AG04450 (cell line): ENCODE measurements at regions of chr1 and their contacts with region 1.

Region 1: DNA sequence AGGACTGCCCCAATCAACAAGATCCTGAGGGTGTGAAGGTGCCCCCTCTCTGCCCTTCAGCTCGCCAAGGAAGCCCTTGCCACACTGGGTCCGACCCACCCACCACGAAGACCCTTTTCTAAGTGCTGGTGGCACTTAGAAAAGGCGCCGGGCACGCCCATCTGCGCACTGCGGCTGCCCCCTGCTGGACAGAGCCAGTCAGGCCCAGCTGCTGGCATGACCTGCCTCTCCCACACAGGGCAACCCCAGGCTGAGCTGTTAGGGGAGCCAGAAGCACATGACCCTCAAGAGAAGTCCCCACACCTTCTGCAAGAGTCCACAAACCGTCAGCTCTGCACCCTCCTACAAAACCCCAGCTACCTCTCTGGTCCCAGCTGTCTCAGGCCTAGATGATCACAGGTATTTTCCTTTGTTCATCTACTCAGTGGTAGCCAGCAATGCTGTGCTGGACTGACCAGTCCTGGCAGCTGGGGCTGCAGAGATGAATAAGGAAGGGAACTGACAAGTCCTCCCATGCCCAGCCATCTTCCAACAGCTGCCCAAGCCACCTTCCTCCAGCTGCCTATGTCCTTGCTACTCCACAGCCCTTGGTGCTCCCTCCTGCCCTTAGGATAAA is 40.0 kb upstream of the ZC3H12A start:
- DNase-seq: no peak
- H3K4me3 ChIP-seq: no peak overlapping the region
- H3K27ac ChIP-seq: no peak overlapping the region
- H3K27me3 ChIP-seq: peaks cover 19% of the 10 kb centered on the region
- CTCF ChIP-seq: peak; percentile 94

Region 2: GRCh38 chr1:36516372-36517325 is 917.8 kb before region 1 on chr1:
- CTCF ChIA-PET with region 1: interaction called, 13 read pairs
- POLR2A ChIA-PET with region 1: interaction called, 3 read pairs
- DNase-seq: no peak
- H3K4me3 ChIP-seq: no peak overlapping the region
- H3K27ac ChIP-seq: no peak overlapping the region
- H3K27me3 ChIP-seq: peaks cover 2% of the 10 kb centered on the region
- CTCF ChIP-seq: peak; percentile 85

Region 3: DNA sequence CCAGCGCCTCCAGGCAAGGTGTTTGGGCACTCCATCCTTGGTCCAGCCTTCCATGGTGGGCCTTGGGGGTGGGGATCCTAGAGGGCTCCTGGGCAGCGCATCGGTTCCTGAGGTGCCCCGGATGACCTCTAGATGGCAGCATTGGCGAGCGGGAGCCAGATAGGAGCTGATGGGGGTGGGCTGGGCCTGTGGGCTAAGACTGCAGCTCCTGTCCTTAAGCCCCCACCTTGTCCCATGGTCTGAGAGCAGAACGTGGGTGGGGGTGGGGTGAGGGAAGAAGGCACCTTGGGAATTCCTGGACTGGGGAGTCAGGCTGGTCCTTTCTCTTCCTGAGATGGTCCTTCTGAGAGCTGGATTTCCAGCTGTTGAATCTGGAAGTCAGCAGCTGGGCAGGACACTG is 858.3 kb before region 1 on chr1:
- CTCF ChIA-PET with region 1: interaction called, 10 read pairs
- POLR2A ChIA-PET with region 1: no interaction called
- DNase-seq: no peak
- H3K4me3 ChIP-seq: no peak overlapping the region
- H3K27ac ChIP-seq: no peak overlapping the region
- H3K27me3 ChIP-seq: peaks cover 6% of the 10 kb centered on the region
- CTCF ChIP-seq: peak; percentile 74

Region 4: GRCh38 chr1:37449936-37450335 is 15.5 kb after region 1 on chr1:
- CTCF ChIA-PET with region 1: interaction called, 30 read pairs
- POLR2A ChIA-PET with region 1: no interaction called
- DNase-seq: no peak
- H3K4me3 ChIP-seq: no peak overlapping the region
- H3K27ac ChIP-seq: no peak overlapping the region
- H3K27me3 ChIP-seq: peaks cover 7% of the 10 kb centered on the region
- CTCF ChIP-seq: no peak

Region 5: GRCh38 chr1:37465593-37466517 is 31.5 kb after region 1 on chr1:
- CTCF ChIA-PET with region 1: no interaction called
- POLR2A ChIA-PET with region 1: no interaction called
- DNase-seq: no peak
- H3K4me3 ChIP-seq: no peak overlapping the region
- H3K27ac ChIP-seq: no peak overlapping the region
- H3K27me3 ChIP-seq: no peaks in the 10 kb centered on the region
- CTCF ChIP-seq: no peak